Endothelial cell of umbilical vein (primary cell): ENCODE measurements at regions of chr10 and their contacts with region 1.

Region 1: DNA sequence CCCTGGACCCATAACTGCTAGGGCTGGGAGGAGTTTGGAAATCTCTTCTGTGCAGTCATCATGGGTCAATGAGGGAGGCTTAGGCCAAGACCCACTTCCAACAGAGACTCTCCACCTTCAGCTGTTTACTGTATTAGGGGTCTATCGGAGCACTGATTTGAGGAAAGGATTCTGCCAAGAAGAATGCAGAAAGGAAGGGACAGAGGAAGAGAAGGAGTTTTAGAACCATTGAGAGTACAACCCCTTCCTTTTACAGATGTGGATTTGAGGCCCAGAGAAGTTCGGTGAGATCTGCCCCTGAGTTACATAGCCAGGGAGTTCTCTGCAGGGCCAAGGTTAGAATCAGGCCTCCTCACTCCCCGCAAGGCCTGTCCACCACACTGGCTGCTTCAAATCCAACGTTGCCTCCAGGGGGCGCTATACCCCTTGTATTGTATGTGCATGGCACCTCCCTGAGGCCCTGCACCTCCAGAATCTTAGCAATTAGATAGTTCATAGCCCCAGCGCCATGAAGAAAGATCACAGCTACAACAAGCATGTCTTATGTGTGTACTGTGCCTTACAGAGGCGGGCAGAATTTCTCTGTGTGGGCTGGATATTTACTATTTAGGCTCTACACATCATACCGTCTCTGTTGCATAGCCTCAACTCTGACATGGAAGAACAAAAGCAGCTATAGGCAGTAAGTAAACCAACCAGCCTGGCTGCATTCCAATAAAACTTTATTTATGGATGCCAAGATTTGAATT is 246.8 kb downstream of the SKIDA1 start:
- DNase-seq: peak; percentile 90
- H3K4me3 ChIP-seq: no peak overlapping the region
- H3K27ac ChIP-seq: no peak overlapping the region
- H3K4me1 ChIP-seq: peaks cover 2% of the 10 kb centered on the region
- H3K27me3 ChIP-seq: no peaks in the 10 kb centered on the region
- CTCF ChIP-seq: peak; percentile 73 to 77
- POLR2A ChIP-seq: no peak

Region 2: DNA sequence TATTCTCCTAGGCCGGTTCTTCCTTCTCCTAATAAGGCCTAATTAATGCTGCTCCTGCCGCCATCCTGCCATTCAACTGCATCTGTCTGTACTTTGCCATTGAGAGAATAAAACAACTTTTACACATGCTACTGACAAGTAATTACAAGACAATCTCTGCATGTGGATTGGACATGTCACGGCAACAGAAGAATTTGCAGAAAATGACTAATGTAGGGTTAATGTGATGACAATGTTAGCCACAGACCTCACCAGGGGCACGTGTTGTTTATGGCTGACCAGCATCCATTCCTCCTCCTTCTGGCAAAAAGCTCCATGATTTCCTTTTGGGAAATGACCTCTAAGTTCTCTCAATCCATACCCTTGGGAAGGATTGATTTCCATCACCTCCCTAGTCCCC is 439.5 kb before region 1 on chr10:
- CTCF ChIA-PET with region 1: no interaction called
- POLR2A ChIA-PET with region 1: no interaction called
- dilution Hi-C with region 1: no loop called
- intact Hi-C with region 1: no loop called
- DNase-seq: no peak
- H3K4me3 ChIP-seq: no peak overlapping the region
- H3K27ac ChIP-seq: no peak overlapping the region
- H3K4me1 ChIP-seq: no peaks in the 10 kb centered on the region
- H3K27me3 ChIP-seq: no peaks in the 10 kb centered on the region
- CTCF ChIP-seq: no peak
- POLR2A ChIP-seq: no peak

Region 3: DNA sequence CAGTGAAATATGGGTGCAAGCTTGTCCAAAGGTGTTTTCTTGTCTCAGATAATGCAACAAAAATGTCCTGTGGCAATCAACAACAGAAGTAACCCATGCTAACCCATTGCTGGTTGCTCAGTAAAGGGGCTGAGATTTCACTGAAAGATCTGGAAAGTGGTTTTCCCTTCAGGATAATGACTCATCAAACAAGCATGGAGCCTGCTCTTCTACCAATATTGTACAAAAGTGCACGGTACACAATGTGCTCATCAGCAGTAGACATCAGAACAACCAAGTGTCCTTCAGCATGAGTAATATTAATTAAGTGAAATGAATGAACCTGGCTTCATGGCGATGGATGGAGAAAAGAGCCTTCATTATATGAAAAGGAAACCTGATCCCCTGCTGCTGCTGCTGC is 94.4 kb before region 1 on chr10:
- CTCF ChIA-PET with region 1: no interaction called
- POLR2A ChIA-PET with region 1: no interaction called
- dilution Hi-C with region 1: no loop called
- intact Hi-C with region 1: no loop called
- DNase-seq: peak; percentile 34
- H3K4me3 ChIP-seq: no peak overlapping the region
- H3K27ac ChIP-seq: no peak overlapping the region
- H3K4me1 ChIP-seq: peaks cover 8% of the 10 kb centered on the region
- H3K27me3 ChIP-seq: no peaks in the 10 kb centered on the region
- CTCF ChIP-seq: no peak
- POLR2A ChIP-seq: no peak

Region 4: GRCh38 chr10:21249435-21249834 is 29.2 kb before region 1 on chr10:
- CTCF ChIA-PET with region 1: no interaction called
- POLR2A ChIA-PET with region 1: no interaction called
- dilution Hi-C with region 1: no loop called
- intact Hi-C with region 1: no loop called
- DNase-seq: no peak
- H3K4me3 ChIP-seq: no peak overlapping the region
- H3K27ac ChIP-seq: no peak overlapping the region
- H3K4me1 ChIP-seq: no peaks in the 10 kb centered on the region
- H3K27me3 ChIP-seq: no peaks in the 10 kb centered on the region
- CTCF ChIP-seq: no peak
- POLR2A ChIP-seq: no peak

Region 5: DNA sequence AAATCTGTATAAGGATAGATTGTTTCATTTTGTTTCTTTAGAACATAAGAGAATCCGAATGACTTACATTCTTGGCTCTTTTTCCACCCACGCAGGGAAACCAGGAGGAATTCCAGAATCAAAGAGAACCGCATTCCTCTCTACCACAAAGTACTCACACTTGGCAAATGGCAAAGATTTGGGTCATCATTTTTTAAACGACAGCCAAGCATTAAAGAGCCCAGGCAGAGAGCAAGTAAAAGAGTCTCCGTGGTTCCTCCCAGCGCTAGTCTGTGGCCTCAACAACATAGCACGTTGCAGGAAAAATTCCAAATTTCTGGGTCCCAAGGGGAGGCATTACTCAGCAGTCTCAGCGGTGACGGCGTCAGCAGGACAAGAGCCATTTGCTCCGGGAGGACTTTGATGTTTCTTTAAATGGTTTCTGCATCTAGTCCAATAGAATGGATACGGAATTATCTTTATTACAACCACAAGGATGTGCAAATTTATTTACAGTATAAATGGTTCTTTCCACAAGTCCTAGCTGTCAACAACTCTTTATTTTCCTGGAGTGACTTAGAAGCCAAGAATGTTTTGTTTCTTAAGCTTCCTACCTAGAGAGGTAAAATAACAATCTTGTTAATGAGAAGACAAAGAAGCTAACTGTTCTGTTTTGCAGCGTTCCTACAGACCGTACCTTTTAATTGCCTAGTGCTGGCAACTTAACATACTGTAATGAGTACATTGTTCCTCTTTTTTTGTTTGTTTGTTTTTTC is 14.3 kb after region 1 on chr10:
- CTCF ChIA-PET with region 1: interaction called, 5 read pairs
- POLR2A ChIA-PET with region 1: no interaction called
- dilution Hi-C with region 1: no loop called
- intact Hi-C with region 1: loop called (anchors 1 kb)
- DNase-seq: peak; percentile 82
- H3K4me3 ChIP-seq: peak overlapping the region; percentile 2 to 57 (median 32)
- H3K27ac ChIP-seq: peak overlapping the region; percentile 83
- H3K4me1 ChIP-seq: peaks cover 19% of the 10 kb centered on the region
- H3K27me3 ChIP-seq: no peaks in the 10 kb centered on the region
- CTCF ChIP-seq: no peak
- POLR2A ChIP-seq: no peak

Region 6: GRCh38 chr10:21336476-21337170 is 58.0 kb after region 1 on chr10:
- CTCF ChIA-PET with region 1: interaction called, 14 read pairs
- POLR2A ChIA-PET with region 1: no interaction called
- dilution Hi-C with region 1: no loop called
- intact Hi-C with region 1: loop called (anchors 1 kb)
- DNase-seq: peak; percentile 93
- H3K4me3 ChIP-seq: no peak overlapping the region
- H3K27ac ChIP-seq: peak overlapping the region; percentile 97
- H3K4me1 ChIP-seq: peaks cover 22% of the 10 kb centered on the region
- H3K27me3 ChIP-seq: no peaks in the 10 kb centered on the region
- CTCF ChIP-seq: peak; percentile 20 to 28
- POLR2A ChIP-seq: peak; percentile 20

Region 7: DNA sequence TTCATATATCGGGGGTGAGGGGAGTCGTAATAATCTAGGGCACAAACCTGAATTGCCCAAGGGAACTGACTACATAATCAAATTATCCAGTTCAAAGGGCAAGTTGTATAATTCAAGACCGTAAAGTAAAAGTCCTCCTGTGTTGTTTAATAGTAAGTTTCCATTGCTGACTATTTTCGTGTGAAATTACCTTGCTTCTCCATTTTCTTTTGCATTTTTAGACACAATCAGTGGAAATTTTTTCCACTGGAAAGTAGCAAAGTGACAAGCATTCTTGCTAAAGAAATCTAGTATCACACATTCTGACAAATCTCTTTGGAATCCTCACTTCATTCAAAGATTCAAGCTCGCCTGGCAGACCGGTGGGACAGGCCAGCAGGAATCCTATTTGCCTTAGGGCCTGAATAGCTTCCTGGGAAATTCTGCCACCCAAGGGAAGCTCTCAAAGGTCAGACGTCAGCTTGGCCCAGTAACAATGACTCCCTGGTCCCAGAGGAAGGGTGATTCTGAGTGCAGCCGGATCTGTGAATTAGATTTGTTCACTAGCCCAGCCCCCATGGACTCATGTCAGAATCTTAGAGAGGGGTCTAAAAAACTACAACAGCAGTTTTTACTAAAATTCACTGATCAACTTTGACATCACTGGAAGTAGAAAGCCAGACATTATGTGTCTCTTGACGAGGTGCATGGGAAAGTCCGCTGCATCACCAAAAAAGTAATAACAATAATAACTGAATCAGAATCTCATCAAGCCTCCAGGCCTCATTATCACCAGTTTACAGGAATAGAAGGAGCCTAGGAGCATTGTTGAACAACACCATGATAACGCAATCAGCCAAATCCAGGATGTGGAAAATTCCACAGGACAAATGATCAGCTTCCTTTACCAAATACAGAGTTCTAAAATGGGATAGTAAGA is 85.8 kb after region 1 on chr10:
- CTCF ChIA-PET with region 1: interaction called, 15 read pairs
- POLR2A ChIA-PET with region 1: no interaction called
- dilution Hi-C with region 1: no loop called
- intact Hi-C with region 1: loop called (anchors 1 kb)
- DNase-seq: peak; percentile 97
- H3K4me3 ChIP-seq: no peak overlapping the region
- H3K27ac ChIP-seq: peak overlapping the region; percentile 96
- H3K4me1 ChIP-seq: peaks cover 40% of the 10 kb centered on the region
- H3K27me3 ChIP-seq: no peaks in the 10 kb centered on the region
- CTCF ChIP-seq: no peak
- POLR2A ChIP-seq: no peak

Region 8: GRCh38 chr10:21516242-21517131 is 237.8 kb after region 1 on chr10:
- CTCF ChIA-PET with region 1: interaction called, 10 read pairs
- POLR2A ChIA-PET with region 1: no interaction called
- dilution Hi-C with region 1: no loop called
- intact Hi-C with region 1: loop called (anchors 1 kb)
- DNase-seq: peak; percentile 53
- H3K4me3 ChIP-seq: peak overlapping the region; percentile 31 to 63 (median 40)
- H3K27ac ChIP-seq: no peak overlapping the region
- H3K4me1 ChIP-seq: peaks cover 26% of the 10 kb centered on the region
- H3K27me3 ChIP-seq: no peaks in the 10 kb centered on the region
- CTCF ChIP-seq: no peak
- POLR2A ChIP-seq: no peak

Region 9: DNA sequence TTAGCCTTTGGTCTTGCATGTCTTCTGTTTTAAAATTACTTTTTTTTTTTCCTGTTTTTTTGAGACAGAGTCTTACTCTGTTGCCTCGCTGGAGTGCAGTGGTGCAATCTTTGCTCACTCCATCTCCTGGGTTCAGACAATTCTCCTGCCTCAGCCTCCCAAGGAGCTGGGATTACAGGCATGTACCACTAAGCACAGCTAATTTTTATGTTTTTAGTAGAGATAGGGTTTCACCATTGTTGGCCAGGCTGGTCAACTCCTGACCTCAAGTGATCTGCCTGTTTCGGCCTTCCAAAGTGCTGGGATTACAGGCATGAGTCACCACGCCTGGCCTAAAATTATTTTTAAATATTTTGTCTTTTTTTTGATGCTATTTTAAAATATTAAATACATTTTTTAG is 293.9 kb after region 1 on chr10:
- CTCF ChIA-PET with region 1: no interaction called
- POLR2A ChIA-PET with region 1: no interaction called
- dilution Hi-C with region 1: no loop called
- intact Hi-C with region 1: no loop called
- DNase-seq: no peak
- H3K4me3 ChIP-seq: no peak overlapping the region
- H3K27ac ChIP-seq: no peak overlapping the region
- H3K4me1 ChIP-seq: no peaks in the 10 kb centered on the region
- H3K27me3 ChIP-seq: no peaks in the 10 kb centered on the region
- CTCF ChIP-seq: no peak
- POLR2A ChIP-seq: no peak

Region 10: GRCh38 chr10:21675157-21675796 is 396.6 kb after region 1 on chr10:
- CTCF ChIA-PET with region 1: no interaction called
- POLR2A ChIA-PET with region 1: no interaction called
- dilution Hi-C with region 1: no loop called
- intact Hi-C with region 1: loop called (anchors 1 kb)
- DNase-seq: peak; percentile 42
- H3K4me3 ChIP-seq: no peak overlapping the region
- H3K27ac ChIP-seq: no peak overlapping the region
- H3K4me1 ChIP-seq: no peaks in the 10 kb centered on the region
- H3K27me3 ChIP-seq: no peaks in the 10 kb centered on the region
- CTCF ChIP-seq: peak; percentile 71 to 73
- POLR2A ChIP-seq: no peak

Region 11: DNA sequence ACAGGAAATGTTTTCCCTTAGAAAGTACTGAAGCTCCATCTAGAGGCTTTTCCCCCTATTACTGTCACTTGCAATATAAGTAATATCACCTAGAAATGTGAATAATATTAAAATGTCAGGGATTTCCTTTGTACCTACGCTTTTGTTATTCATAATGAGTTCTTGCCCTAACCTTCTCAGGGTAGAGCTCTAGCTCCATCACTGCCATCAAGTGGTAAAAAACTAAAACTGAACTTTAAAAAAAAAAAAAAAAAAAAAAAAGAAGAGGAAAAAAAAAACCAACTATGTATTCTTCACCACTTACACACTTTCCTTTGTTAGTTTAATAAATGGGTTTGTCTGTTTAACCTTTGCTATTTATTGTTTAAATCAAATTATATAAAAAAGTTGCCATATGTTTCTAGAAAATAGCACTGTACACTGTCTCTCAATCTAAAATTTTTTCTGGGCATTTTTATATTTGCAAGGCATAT is 675.0 kb after region 1 on chr10:
- CTCF ChIA-PET with region 1: interaction called, 6 read pairs
- POLR2A ChIA-PET with region 1: no interaction called
- dilution Hi-C with region 1: no loop called
- intact Hi-C with region 1: loop called (anchors 1 kb)
- DNase-seq: peak; percentile 70
- H3K4me3 ChIP-seq: no peak overlapping the region
- H3K27ac ChIP-seq: no peak overlapping the region
- H3K4me1 ChIP-seq: no peaks in the 10 kb centered on the region
- H3K27me3 ChIP-seq: no peaks in the 10 kb centered on the region
- CTCF ChIP-seq: peak in 1 of 2 donors; percentile 9
- POLR2A ChIP-seq: no peak